AG04450 (cell line): ENCODE measurements at regions of chr6 and their contacts with region 1.

Region 1: DNA sequence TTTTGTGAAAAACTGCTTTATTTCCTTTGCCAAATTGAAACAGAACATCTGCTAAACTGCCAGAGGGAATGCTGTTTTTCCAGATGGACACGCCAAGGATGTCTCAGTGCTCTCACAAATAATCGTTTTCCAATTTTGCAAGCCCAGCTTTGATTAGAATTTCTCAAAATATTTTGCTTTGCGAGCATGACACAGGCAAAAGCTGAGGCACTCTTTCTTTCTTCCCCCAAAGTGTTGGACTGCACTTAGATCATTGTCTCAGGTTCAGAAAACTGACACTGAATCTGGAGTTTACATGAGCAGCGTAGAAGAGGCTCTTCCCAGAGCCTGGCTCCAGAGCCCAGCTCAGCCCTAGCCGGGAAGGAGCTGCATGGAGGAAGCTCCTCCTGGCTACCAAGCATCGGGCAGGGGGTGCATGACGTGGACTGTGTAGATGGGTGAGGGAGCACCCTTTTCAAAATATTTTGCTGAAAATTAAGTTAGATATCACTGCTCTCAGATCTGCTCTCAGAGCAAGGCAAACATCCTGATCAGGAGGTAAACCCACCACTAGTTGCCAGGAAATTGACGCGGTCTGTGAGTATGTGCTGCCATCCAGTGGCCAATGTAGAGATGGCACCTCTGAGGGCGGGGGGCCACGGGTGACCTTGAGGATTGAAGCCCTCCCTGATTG is 107.5 kb downstream of the SLC22A3 start:
- DNase-seq: peak; percentile 24
- H3K4me3 ChIP-seq: peak overlapping the region; percentile 48
- H3K27ac ChIP-seq: peak overlapping the region; percentile 43
- H3K27me3 ChIP-seq: no peaks in the 10 kb centered on the region
- CTCF ChIP-seq: peak; percentile 97

Region 2: DNA sequence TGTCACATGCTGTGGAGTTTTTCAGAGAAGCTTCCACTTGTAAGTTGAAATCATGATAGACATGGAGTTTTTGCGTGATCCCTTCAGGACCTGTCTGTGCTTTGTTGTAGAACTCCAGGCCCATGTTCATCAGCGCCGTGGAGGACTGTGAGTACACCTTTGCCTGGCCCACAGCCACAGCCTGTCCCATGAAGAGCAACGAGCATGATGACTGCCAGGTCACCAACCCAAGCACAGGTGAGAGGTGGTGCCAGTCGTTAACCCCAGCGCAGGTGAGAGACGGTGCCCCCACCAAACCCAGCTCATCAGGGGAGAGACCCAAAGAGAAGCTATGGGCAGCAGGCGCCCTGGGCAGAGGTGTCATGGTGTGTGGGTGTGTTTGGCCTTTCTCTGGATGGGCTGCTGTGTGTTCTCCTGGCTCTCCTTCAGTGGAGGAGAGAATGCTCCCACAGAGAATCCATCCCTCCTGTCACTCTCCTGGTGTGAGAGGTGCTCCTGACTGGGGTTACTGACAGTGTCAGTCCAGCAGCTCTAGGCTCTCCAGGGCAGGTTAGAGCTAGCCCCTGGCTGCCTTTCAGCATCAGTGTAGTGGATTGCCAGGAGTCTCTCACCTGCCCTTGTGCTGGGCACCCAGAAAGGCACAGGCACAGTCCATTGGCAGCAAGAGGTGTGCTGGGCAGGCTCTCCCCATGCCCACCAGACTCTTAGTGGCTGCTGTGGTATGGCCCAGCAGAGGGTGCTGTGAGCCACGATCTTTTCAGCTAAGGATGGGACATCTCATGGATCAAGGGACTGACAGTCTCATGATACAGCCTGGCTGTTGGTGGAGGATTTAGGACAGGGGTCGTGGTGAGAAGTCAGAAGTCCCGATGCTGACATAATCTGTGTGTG is 383.6 kb before region 1 on chr6:
- CTCF ChIA-PET with region 1: interaction called, 13 read pairs
- POLR2A ChIA-PET with region 1: no interaction called
- DNase-seq: no peak
- H3K4me3 ChIP-seq: no peak overlapping the region
- H3K27ac ChIP-seq: no peak overlapping the region
- H3K27me3 ChIP-seq: no peaks in the 10 kb centered on the region
- CTCF ChIP-seq: peak; percentile 15; the same call in 1 of the 2 replicates

Region 3: GRCh38 chr6:160082627-160083026 is 373.1 kb before region 1 on chr6:
- CTCF ChIA-PET with region 1: interaction called, 186 read pairs
- POLR2A ChIA-PET with region 1: no interaction called
- DNase-seq: no peak
- H3K4me3 ChIP-seq: no peak overlapping the region
- H3K27ac ChIP-seq: no peak overlapping the region
- H3K27me3 ChIP-seq: no peaks in the 10 kb centered on the region
- CTCF ChIP-seq: no peak

Region 4: GRCh38 chr6:160102956-160103824 is 352.5 kb before region 1 on chr6:
- CTCF ChIA-PET with region 1: interaction called, 12 read pairs
- POLR2A ChIA-PET with region 1: no interaction called
- DNase-seq: no peak
- H3K4me3 ChIP-seq: no peak overlapping the region
- H3K27ac ChIP-seq: no peak overlapping the region
- H3K27me3 ChIP-seq: no peaks in the 10 kb centered on the region
- CTCF ChIP-seq: peak; percentile 39

Region 5: GRCh38 chr6:160261991-160262680 is 193.5 kb before region 1 on chr6:
- CTCF ChIA-PET with region 1: no interaction called
- POLR2A ChIA-PET with region 1: no interaction called
- DNase-seq: no peak
- H3K4me3 ChIP-seq: no peak overlapping the region
- H3K27ac ChIP-seq: no peak overlapping the region
- H3K27me3 ChIP-seq: no peaks in the 10 kb centered on the region
- CTCF ChIP-seq: no peak

Region 6: DNA sequence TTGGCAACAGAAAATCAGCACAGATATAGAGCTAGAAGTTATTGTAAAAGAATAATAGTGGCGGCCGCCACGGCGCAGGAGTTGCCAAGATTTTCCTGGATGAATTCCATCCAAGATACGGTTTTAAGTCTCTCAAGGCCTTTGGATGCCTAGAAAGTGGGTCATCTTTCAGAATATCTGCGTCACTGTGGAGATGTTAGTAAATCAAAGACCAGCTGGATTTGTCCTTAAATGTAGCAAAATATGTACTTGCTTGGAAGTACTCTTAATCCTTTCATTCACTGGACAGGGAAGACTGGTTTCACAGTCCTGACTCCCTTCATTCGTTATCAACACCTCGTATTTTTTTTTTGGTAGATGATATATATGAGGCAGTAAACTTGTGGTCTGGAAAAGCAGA is 24.5 kb before region 1 on chr6:
- CTCF ChIA-PET with region 1: interaction called, 32 read pairs
- POLR2A ChIA-PET with region 1: no interaction called
- DNase-seq: peak; percentile 82
- H3K4me3 ChIP-seq: no peak overlapping the region
- H3K27ac ChIP-seq: no peak overlapping the region
- H3K27me3 ChIP-seq: peaks cover 8% of the 10 kb centered on the region
- CTCF ChIP-seq: no peak

Region 7: GRCh38 chr6:160544802-160545201 is 89.1 kb after region 1 on chr6:
- CTCF ChIA-PET with region 1: no interaction called
- POLR2A ChIA-PET with region 1: no interaction called
- DNase-seq: no peak
- H3K4me3 ChIP-seq: no peak overlapping the region
- H3K27ac ChIP-seq: no peak overlapping the region
- H3K27me3 ChIP-seq: no peaks in the 10 kb centered on the region
- CTCF ChIP-seq: no peak

Region 8: DNA sequence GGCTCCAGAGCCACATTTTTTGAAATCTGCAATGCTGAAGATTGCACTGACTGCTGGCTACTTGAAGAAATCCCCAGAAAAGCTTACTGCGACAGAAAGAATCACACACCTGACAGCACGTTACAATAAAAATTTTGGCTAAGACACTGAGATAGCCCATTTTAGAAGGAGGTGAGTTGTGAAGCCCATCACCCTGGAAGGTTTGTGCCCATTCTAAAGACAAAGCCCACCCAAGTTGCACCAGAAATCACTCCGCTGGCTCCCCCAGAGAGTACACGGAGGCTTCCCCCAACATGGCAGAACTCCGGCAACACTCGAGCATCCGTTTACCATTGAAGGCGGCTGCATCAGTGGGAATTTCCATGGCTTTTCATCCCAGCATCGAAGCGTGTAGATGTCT is 179.0 kb after region 1 on chr6:
- CTCF ChIA-PET with region 1: no interaction called
- POLR2A ChIA-PET with region 1: no interaction called
- DNase-seq: no peak
- H3K4me3 ChIP-seq: no peak overlapping the region
- H3K27ac ChIP-seq: no peak overlapping the region
- H3K27me3 ChIP-seq: no peaks in the 10 kb centered on the region
- CTCF ChIP-seq: no peak